ENCODE measurements at regions of chr6 and their contacts with region 1.

Region 1: GRCh38 chr6:41027799-41028628 is 11.0 kb downstream of the UNC5CL start:
- DNase-seq: peak; percentile 18
- H3K4me3 ChIP-seq: peak overlapping the region; percentile 60
- H3K27ac ChIP-seq: no peak overlapping the region
- H3K27me3 ChIP-seq: peaks cover 4% of the 10 kb centered on the region
- CTCF ChIP-seq: peak; percentile 89

Region 2: DNA sequence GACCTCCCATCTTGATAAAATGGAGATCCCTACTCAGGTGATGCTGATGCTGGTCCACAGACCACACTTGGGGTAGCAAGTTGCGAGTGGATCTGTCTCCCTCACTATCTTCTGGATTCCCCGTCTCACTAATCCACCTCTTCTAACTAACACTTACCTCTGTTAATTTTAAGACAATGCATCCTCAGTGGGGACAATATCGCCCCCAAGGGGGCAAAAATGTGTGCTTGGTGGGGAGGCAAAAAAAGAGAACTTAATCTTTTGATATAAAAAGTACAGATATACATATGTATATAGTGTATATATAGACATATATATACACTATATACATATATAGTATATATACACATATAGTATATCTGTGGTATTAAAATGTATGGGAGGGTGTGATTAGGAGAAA is 445.1 kb before region 1 on chr6:
- CTCF ChIA-PET with region 1: no interaction called
- POLR2A ChIA-PET with region 1: no interaction called
- DNase-seq: no peak
- H3K4me3 ChIP-seq: no peak overlapping the region
- H3K27ac ChIP-seq: no peak overlapping the region
- H3K27me3 ChIP-seq: peaks cover 27% of the 10 kb centered on the region
- CTCF ChIP-seq: no peak

Region 3: GRCh38 chr6:40845553-40845952 is 182.5 kb before region 1 on chr6:
- CTCF ChIA-PET with region 1: interaction called, 20 read pairs
- POLR2A ChIA-PET with region 1: no interaction called
- DNase-seq: peak; percentile 11
- H3K4me3 ChIP-seq: no peak overlapping the region
- H3K27ac ChIP-seq: no peak overlapping the region
- H3K27me3 ChIP-seq: peaks cover 18% of the 10 kb centered on the region
- CTCF ChIP-seq: peak; percentile 66

Region 4: GRCh38 chr6:40907198-40907704 is 120.8 kb before region 1 on chr6:
- CTCF ChIA-PET with region 1: interaction called, 12 read pairs
- POLR2A ChIA-PET with region 1: no interaction called
- DNase-seq: no peak
- H3K4me3 ChIP-seq: no peak overlapping the region
- H3K27ac ChIP-seq: no peak overlapping the region
- H3K27me3 ChIP-seq: no peaks in the 10 kb centered on the region
- CTCF ChIP-seq: no peak

Region 5: GRCh38 chr6:41008011-41008410 is 20.0 kb before region 1 on chr6:
- CTCF ChIA-PET with region 1: interaction called, 29 read pairs
- POLR2A ChIA-PET with region 1: no interaction called
- DNase-seq: no peak
- H3K4me3 ChIP-seq: no peak overlapping the region
- H3K27ac ChIP-seq: no peak overlapping the region
- H3K27me3 ChIP-seq: peaks cover 14% of the 10 kb centered on the region
- CTCF ChIP-seq: no peak

Region 6: GRCh38 chr6:41039060-41039998 is 11.3 kb after region 1 on chr6 and contains the start of gene UNC5CL:
- CTCF ChIA-PET with region 1: interaction called, 51 read pairs
- POLR2A ChIA-PET with region 1: no interaction called
- DNase-seq: no peak
- H3K4me3 ChIP-seq: no peak within 1 kb of the TSS
- H3K27ac ChIP-seq: no peak within 1 kb of the TSS
- H3K27me3 ChIP-seq: peaks cover 21% of the 10 kb centered on the region
- CTCF ChIP-seq: peak; percentile 67
- polyA plus RNA-seq, gene UNC5CL: 0.02 TPM in 2 replicates

Region 7: DNA sequence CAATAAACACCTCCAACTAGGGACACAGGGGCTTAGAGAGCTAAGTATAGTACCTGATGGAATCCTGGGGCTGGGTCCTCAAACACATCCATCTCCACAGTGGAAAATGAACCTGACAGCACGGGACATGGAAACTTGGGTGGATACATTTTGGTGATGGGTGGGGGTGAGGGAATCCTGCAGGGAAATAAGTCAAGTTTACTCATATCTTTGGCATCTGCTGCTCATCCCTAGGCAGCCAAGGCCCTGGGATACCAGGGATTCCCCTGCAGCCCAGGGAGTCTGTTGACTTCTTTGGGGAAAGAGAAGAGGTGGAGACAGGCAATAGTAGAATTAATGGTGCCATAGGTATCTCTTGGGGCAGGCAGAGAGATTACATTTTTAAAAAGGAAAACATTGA is 31.5 kb after region 1 on chr6:
- CTCF ChIA-PET with region 1: interaction called, 26 read pairs
- POLR2A ChIA-PET with region 1: no interaction called
- DNase-seq: no peak
- H3K4me3 ChIP-seq: no peak overlapping the region
- H3K27ac ChIP-seq: no peak overlapping the region
- H3K27me3 ChIP-seq: peaks cover 2% of the 10 kb centered on the region
- CTCF ChIP-seq: no peak

Measured in AG04450 (cell line).